HCT116 (cell line): ENCODE measurements at regions of chr19 and their contacts with region 1.

Region 1: DNA sequence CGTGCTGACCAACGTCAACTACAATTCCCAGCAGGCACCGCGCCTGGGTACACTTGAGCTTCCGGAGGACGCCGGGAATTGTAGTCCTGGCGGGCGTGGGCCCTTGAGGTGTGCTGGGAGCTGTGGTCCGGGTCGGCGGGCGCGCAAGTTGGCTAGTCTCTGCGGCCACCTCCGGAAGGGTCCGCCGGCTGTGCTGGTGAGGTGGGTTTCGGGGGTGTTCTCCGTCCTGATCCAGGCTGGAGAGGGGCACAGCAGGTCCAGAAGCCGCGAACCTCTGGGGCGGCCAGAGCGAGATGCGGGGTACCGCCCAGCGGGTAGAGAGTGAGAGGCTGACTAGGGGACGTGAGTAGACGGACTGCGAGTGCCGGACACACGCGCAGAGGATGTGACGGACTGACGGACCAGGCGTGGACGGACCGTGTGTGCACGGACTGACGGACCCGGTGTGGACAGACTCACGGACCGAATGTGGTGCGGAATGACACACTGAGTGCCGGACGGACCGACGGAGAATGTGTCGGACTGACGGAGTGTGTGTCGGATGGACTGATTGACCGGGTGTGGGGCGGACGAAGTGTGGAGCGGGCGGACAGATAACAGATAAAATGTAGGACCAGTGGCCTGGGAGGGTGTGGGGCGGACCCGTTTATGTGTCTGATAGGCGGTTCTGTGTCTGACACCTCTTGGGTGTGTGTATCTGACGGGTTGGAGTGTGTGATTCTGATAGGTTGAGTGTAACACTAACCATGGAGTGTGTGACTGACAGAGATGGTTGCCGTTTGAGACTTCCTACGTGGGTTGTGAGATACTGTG is at the start of gene ZSCAN22:
- DNase-seq: peak; percentile 94
- ATAC-seq: peak; percentile 93
- H3K4me3 ChIP-seq: peak within 1 kb of the TSS; percentile 78 to 91
- H3K27ac ChIP-seq: peak within 1 kb of the TSS; percentile 71
- H3K4me1 ChIP-seq: peaks cover 10 to 24% of the 10 kb centered on the region in 2 experiments
- H3K27me3 ChIP-seq: no peaks in the 10 kb centered on the region
- CTCF ChIP-seq: no peak
- POLR2A ChIP-seq: peak; percentile 85
- RAD21 ChIP-seq: no peak; the same call in 1 of the 2 replicates
- total RNA-seq, gene ZSCAN22: 4.6 TPM

Region 2: GRCh38 chr19:58228585-58229254 is 98.4 kb before region 1 on chr19 and contains the start of gene ZNF544:
- CTCF ChIA-PET with region 1: no interaction called
- POLR2A ChIA-PET with region 1: no interaction called
- RAD21 ChIA-PET with region 1: no interaction called
- intact Hi-C with region 1: loop called (anchors 1 kb)
- DNase-seq: peak; percentile 48
- ATAC-seq: peak; percentile 92
- H3K4me3 ChIP-seq: peak within 1 kb of the TSS; percentile 73 to 91
- H3K27ac ChIP-seq: peak within 1 kb of the TSS; percentile 98
- H3K4me1 ChIP-seq: peaks cover 3 to 17% of the 10 kb centered on the region in 2 experiments
- H3K27me3 ChIP-seq: no peaks in the 10 kb centered on the region
- CTCF ChIP-seq: no peak
- POLR2A ChIP-seq: peak; percentile 89
- RAD21 ChIP-seq: no peak
- total RNA-seq, gene ZNF544: 46.3 TPM

Region 3: DNA sequence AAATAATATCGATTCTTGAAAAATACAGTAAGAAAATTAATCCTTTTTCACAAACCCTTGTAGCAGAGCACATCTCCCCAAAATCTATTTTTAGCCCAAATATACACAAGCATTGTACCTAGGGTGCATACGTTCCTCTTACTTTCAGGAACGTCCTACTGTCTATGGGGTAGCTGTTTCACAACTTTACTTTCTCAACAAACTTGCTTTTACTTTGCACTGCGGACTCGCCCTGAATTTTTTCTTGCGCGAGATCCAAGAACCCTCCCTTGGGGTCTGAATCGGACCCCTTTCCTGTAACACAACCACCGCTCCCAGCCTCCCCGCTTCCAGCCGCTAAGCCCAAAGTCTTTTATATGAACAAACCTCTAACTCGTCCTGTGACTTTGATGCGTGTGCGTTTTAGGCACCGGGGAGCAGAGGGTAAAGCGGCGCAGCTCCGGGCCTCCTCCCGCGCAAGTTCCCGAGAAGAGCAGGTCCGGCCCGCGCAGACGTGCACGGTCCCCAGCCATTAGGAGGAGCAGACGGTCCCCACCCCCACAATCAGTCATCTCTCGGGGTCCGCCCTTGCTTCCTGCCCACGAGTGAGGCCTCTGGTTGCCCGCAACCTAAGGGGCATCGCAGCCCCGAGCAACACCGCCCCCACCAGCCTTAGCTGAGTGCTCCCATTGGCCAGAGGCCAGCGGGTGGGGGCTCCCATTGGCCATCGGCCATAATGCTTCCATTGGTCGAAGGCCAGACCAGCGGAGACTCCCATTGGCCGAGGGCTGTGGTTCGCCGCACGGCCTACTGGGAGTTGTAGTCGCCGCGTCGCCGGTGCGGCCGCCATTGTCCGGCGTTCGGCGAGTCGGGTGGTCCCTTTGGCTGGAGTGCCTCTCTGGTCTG is 48.7 kb before region 1 on chr19 and contains the start of gene ZNF8:
- CTCF ChIA-PET with region 1: no interaction called
- POLR2A ChIA-PET with region 1: no interaction called
- RAD21 ChIA-PET with region 1: no interaction called
- intact Hi-C with region 1: no loop called
- DNase-seq: peak; percentile 95
- ATAC-seq: peak; percentile 95
- H3K4me3 ChIP-seq: peak within 1 kb of the TSS; percentile 81 to 83
- H3K27ac ChIP-seq: peak within 1 kb of the TSS; percentile 74
- H3K4me1 ChIP-seq: peaks cover 4 to 23% of the 10 kb centered on the region in 2 experiments; a peak in 3 of 4 replicates
- H3K27me3 ChIP-seq: no peaks in the 10 kb centered on the region
- CTCF ChIP-seq: no peak
- POLR2A ChIP-seq: no peak
- RAD21 ChIP-seq: no peak
- total RNA-seq, gene ZNF8: 6.4 TPM

Region 4: DNA sequence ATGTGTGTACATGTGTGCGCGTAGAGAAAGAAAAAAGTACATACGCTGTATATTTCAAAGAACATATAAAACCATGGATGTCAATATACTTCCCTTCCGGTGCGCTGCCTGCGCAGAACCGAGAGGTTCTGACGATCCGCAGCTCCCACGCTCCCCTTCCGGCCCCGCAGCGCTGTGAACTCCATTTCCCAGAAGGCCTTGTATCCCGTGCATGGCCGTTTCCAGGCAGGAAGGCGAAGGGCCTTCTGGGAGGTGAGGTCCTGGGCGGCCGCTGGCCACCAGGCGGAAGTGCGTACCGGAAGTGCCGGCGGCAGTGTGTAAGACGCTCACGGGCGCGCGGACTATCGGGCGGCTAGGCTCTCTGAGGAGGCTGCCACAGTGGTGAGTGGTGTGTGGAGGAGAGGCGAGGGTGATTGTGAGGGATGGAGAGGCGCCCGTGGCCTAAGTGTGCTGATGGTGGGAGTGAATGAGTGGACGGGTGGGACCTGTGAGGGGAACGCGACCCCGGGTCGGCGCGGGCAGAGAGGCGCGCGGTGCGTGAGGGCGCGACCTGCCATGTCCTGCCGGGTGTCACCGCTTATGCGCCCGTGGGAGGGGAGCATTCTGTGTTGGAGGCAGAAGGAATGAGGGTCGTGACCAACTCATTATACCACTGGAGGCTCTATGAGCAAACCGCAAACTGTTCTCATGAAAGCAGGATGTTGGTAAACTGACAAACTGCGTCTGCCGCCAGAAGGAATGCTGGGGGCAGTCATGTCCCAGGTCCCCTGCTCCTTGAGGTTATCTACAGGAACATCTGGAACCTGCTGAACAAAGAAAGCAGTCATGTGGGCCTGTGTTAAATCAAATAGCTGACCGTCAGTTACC is 21.8 kb before region 1 on chr19 and contains the start of gene ERVK3-1:
- CTCF ChIA-PET with region 1: no interaction called
- POLR2A ChIA-PET with region 1: interaction called, 4 read pairs
- RAD21 ChIA-PET with region 1: no interaction called
- intact Hi-C with region 1: loop called (anchors 1 kb)
- DNase-seq: peak; percentile 91
- ATAC-seq: peak; percentile 99
- H3K4me3 ChIP-seq: peak within 1 kb of the TSS; percentile 92 to 93
- H3K27ac ChIP-seq: peak within 1 kb of the TSS; percentile 74
- H3K4me1 ChIP-seq: peaks cover 5 to 15% of the 10 kb centered on the region in 2 experiments; a peak in 3 of 4 replicates
- H3K27me3 ChIP-seq: no peaks in the 10 kb centered on the region
- CTCF ChIP-seq: no peak
- POLR2A ChIP-seq: peak; percentile 78
- RAD21 ChIP-seq: no peak
- total RNA-seq, gene ERVK3-1: 28.1 TPM

Region 5: DNA sequence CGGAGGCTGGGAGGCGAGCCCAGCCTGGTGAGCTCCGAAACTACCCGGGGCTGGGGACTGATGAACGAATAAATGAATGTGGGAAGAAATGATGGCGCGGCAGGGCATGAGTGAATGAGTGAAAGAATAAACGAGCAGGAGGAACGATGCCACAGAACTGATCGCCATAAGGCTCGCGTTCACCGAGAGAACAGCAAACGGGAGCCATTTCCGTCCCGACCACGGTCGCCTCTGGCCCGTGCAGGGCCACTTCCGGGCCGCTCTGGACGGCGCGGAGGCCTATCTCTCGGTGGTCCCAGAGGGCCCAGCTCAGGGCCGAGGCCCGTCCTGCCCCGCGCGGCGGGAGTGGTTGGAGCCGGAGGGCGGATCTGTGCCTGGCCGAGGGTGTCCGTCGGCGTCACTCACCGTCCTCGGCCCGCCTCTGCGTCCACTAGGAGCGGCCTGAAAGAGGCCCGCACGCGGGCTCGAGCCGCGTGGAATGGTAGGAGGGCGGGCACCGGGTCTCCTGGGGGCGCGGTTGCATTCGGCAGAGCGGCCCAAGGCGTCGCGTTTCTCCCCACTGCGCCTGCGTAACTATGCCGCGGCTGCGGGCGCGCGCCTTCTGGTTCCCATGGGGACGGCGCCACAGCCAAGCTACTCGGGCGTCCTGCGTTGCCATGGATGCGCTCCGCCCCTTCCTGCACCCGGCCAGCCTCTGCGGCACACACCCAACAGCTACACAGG is 35.3 kb after region 1 on chr19 and contains the start of gene ZNF497:
- CTCF ChIA-PET with region 1: interaction called, 3 read pairs
- POLR2A ChIA-PET with region 1: interaction called, 9 read pairs
- RAD21 ChIA-PET with region 1: no interaction called
- intact Hi-C with region 1: loop called (anchors 1 kb)
- DNase-seq: peak; percentile 94
- ATAC-seq: peak; percentile 91
- H3K4me3 ChIP-seq: peak within 1 kb of the TSS; percentile 81 to 90
- H3K27ac ChIP-seq: peak within 1 kb of the TSS; percentile 100
- H3K4me1 ChIP-seq: peaks cover 6 to 19% of the 10 kb centered on the region in 2 experiments; a peak in 3 of 4 replicates
- H3K27me3 ChIP-seq: no peaks in the 10 kb centered on the region
- CTCF ChIP-seq: no peak
- POLR2A ChIP-seq: peak; percentile 84
- RAD21 ChIP-seq: no peak
- total RNA-seq, gene ZNF497: 5.1 TPM

Region 6: DNA sequence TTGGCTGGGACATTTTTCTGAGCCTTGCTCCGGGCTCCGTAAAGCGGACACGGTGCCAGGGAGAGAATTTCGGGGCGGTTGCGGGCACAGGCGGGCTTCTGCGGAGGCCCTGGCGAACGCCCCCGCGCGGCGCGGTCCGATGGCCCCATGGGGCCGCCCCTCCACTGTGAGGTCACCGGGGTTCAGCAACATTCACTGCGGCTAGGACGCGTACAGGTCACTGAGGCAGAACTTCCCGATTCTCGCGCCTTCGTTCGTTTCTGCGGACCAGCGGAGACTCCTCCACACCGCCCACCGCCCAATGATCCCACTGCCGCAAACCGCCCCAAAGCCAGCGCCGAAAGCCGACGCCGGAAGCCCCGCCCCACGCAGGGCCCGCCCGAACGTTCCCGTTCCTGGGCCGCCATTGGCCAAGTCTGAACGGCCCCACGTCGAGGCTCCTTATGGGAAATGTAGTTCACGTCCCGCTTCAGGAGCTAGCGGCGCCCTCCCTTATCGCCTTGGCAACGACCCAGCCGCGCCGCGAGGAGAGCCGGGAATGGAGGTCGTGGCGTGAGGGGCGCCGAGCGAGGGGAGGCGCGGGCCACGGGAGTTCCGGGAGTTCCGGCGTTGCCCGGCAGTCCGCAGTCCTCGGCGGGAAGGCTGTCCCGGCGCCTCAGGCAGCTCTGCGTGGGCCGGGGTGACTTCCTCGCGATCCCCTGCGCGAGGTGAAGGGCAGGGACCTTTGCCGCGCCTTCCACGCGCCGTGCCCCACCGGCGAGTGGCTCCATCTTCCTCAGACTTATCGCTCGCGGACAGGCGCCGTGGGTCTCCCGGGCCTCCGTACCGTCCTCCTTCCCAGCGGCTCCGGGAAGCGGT is 81.3 kb after region 1 on chr19 and contains the start of gene ZNF584:
- CTCF ChIA-PET with region 1: no interaction called
- POLR2A ChIA-PET with region 1: no interaction called
- RAD21 ChIA-PET with region 1: no interaction called
- intact Hi-C with region 1: loop called (anchors 5 kb)
- DNase-seq: peak; percentile 85
- ATAC-seq: peak; percentile 89
- H3K4me3 ChIP-seq: peak within 1 kb of the TSS; percentile 93 to 99
- H3K27ac ChIP-seq: peak within 1 kb of the TSS; percentile 93
- H3K4me1 ChIP-seq: peaks cover 16 to 30% of the 10 kb centered on the region in 2 experiments
- H3K27me3 ChIP-seq: no peaks in the 10 kb centered on the region
- CTCF ChIP-seq: no peak; a peak in 1 of 6 replicates
- POLR2A ChIP-seq: peak; percentile 81
- RAD21 ChIP-seq: no peak
- total RNA-seq, gene ZNF584: 25.8 TPM